A549 (cell line): ENCODE measurements at regions of chr11 and their contacts with region 1.

Region 1: GRCh38 chr11:63671322-63672155 is at the start of gene ATL3:
- DNase-seq: peak; percentile 90 to 99
- ATAC-seq: peak; percentile 89 to 91
- H3K4me3 ChIP-seq: peak within 1 kb of the TSS; percentile 73
- H3K27ac ChIP-seq: peak within 1 kb of the TSS; percentile 96
- H3K4me1 ChIP-seq: peaks cover 55% of the 10 kb centered on the region
- CTCF ChIP-seq: no peak
- EP300 ChIP-seq: no peak
- POLR2A ChIP-seq: peak; percentile 61
- RAD21 ChIP-seq: no peak
- polyA plus RNA-seq, gene ATL3: 45.4 and 50.8 TPM in 2 replicates

Region 2: DNA sequence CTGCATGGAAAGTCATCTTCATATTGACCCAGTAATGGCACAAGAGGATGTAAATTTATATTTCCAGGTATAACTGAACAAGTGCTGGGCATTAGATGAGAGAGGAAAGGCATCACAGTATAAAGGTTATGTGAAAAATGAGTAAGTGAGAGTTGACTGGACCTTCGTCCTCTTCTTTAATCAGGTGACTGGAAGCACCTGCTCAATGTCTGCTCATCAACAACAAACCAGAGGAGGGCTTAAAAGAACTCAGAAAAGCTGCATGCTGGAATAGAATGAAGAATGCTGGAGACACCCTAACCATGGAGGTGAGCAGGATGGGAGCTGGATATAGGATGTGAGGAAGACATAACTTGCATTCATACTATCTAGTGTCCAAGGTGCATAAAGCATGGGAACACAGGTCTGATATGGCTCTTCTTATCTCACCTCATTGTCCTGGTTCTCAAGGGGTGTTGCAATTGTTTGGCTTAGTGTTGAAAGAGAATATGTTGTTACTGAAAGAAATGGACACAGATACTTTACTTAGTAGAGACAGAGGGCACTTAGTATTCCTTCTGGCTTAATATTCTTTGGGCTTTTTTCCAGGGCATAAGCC is 309.2 kb before region 1 on chr11:
- CTCF ChIA-PET with region 1: no interaction called
- POLR2A ChIA-PET with region 1: no interaction called
- DNase-seq: no peak
- ATAC-seq: no peak
- H3K4me3 ChIP-seq: no peak overlapping the region
- H3K27ac ChIP-seq: no peak overlapping the region
- H3K4me1 ChIP-seq: no peaks in the 10 kb centered on the region
- CTCF ChIP-seq: no peak
- EP300 ChIP-seq: no peak
- POLR2A ChIP-seq: no peak
- RAD21 ChIP-seq: no peak

Region 3: DNA sequence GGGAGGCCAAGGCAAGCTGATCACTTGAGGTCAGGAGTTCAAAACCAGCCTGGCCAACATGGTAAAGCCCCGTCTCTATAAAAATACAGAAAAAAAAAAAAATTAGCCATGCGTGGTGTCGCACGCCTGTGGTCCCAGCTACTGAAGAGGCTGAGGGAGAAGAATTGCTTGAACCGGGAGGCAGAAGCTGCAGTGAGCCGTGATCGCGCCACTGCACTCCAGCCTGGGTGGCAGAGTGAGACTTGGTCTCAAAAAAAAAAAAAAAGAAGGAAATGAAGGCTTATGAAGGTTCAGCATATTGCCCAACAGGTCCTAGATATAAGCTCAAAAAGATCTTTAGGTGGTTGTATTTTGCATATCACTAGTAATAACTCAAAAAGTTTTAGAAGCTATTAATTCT is 10.6 kb before region 1 on chr11:
- CTCF ChIA-PET with region 1: interaction called, 17 read pairs
- POLR2A ChIA-PET with region 1: interaction called, 4 read pairs
- DNase-seq: no peak
- ATAC-seq: no peak
- H3K4me3 ChIP-seq: no peak overlapping the region
- H3K27ac ChIP-seq: no peak overlapping the region
- H3K4me1 ChIP-seq: peaks cover 20% of the 10 kb centered on the region
- CTCF ChIP-seq: no peak
- EP300 ChIP-seq: no peak
- POLR2A ChIP-seq: no peak
- RAD21 ChIP-seq: no peak

Region 4: DNA sequence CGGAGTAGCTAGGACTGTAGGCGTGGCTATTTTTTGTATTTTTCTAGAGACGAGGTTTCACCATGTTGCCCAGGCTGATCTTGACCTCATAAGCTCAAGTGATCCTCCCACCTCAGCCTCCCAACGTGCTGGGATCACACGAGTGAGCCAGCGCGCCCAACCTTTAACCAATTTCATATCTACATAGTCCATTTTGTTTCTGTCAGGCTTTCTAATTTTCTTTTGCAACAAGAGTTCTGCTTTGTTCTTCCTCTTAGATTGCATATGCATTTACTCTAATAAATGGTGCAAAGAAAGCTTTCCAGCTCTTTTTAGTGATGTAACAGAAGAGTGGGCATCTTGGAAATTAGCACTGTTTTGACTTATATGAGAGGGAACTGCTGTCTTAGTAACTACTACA is 23.1 kb after region 1 on chr11:
- CTCF ChIA-PET with region 1: interaction called, 12 read pairs
- POLR2A ChIA-PET with region 1: interaction called, 9 read pairs
- DNase-seq: no peak
- ATAC-seq: no peak
- H3K4me3 ChIP-seq: no peak overlapping the region
- H3K27ac ChIP-seq: no peak overlapping the region
- H3K4me1 ChIP-seq: peaks cover 8% of the 10 kb centered on the region
- CTCF ChIP-seq: no peak
- EP300 ChIP-seq: no peak
- POLR2A ChIP-seq: no peak
- RAD21 ChIP-seq: no peak